Calu3 (cell line): ENCODE measurements at regions of chr12 and their contacts with region 1.

Region 1: DNA sequence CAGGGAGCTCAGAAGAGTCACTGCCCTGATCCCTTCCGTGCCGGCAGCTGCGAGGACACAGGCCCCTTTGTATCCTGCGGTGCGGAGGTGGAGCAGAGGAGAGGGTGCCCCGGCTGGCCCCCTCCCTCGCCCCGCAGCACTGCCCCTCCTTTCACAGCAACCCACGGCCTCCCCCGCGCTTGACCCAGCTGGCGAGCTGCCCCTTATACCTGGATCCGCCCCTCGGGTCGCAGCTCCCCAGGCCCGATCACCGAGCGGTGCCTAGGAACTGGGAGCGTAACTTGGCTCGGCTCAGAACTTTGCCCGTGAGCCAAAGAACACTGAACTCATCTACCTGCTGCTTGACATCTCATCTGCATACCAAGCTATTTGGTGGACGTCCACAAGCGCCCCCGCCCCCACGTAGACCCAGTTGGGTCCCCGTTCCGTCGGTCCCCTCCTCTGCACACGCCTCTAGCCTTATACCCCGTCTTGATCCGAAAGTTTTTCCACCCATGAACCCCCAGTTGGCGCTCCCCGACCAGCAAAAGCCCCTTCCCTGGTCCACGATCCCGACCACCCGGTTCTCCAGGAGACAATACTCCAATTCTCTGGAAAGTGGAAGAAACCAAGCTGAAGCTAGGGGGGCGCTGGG is 697 bp upstream of the DNAJC14 start:
- DNase-seq: no peak
- H3K4me3 Mint-ChIP-seq: peak overlapping the region; percentile 91
- H3K27ac Mint-ChIP-seq: peak overlapping the region; percentile 84
- H3K4me1 Mint-ChIP-seq: peaks cover 27% of the 10 kb centered on the region
- H3K27me3 Mint-ChIP-seq: no peaks in the 10 kb centered on the region
- CTCF ChIP-seq: no peak

Region 2: DNA sequence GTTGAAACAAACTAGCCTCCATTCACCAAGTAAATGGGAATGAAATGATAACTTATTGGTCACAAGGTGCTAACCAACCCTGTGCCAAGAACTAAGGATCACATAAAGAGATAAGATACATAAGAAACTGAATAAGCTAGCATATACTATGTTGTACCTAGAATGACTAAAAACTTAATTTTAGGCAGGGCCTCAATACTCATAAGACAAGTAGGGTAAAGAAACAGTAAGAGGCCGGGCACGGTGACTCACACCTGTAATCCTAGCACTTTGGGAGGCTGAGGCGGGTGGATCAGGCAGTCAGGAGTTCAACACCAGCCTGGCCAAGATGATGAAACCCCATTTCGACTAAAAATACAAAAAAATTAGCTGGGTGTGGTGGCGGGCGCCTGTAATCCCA is 69.4 kb before region 1 on chr12:
- CTCF ChIA-PET with region 1: no interaction called
- intact Hi-C with region 1: no loop called
- DNase-seq: no peak
- H3K4me3 Mint-ChIP-seq: no peak overlapping the region
- H3K27ac Mint-ChIP-seq: no peak overlapping the region
- H3K4me1 Mint-ChIP-seq: no peaks in the 10 kb centered on the region
- H3K27me3 Mint-ChIP-seq: no peaks in the 10 kb centered on the region
- CTCF ChIP-seq: no peak

Region 3: DNA sequence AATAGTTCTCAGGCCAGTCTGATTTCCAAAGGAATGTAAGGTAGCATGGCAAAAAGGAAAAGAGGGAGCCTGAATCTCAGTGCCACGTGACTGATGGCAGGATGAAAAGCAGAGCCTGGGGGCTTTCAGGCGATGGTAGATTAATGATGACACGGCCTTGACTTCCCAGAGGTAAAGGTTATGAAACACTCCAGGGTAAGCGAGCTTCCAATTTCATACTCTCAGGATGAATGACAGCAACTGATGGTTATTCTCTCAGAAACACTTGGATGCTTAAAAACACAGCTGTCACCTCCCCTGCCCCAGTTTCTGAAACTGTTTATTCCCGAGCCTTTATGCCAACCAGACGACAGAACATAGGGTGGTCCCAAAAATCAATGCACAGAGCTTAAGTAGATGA is 58.3 kb before region 1 on chr12:
- CTCF ChIA-PET with region 1: interaction called, 12 read pairs
- intact Hi-C with region 1: no loop called
- DNase-seq: no peak
- H3K4me3 Mint-ChIP-seq: no peak overlapping the region
- H3K27ac Mint-ChIP-seq: no peak overlapping the region
- H3K4me1 Mint-ChIP-seq: no peaks in the 10 kb centered on the region
- H3K27me3 Mint-ChIP-seq: no peaks in the 10 kb centered on the region
- CTCF ChIP-seq: no peak

Region 4: DNA sequence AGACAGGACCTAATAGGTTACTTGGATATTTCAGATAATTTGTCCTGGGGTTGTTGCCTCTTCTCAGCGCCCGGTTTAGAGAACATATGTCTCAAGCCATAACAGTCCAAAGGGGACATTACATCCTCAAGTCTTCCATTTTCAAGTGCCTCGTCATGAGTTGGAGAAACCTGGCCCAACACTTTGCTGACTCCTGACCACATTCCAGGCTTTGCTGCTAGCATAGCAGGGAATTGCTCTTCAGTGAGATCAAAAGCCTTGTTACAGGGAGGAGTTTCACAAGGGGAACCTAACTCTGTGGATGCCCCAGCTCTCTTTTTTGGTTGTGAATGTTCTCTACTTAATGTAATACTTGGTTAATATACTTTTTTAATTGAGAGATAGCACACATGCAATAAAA is 20.8 kb after region 1 on chr12:
- CTCF ChIA-PET with region 1: no interaction called
- intact Hi-C with region 1: no loop called
- DNase-seq: no peak
- H3K4me3 Mint-ChIP-seq: no peak overlapping the region
- H3K27ac Mint-ChIP-seq: no peak overlapping the region
- H3K4me1 Mint-ChIP-seq: peaks cover 8% of the 10 kb centered on the region
- H3K27me3 Mint-ChIP-seq: peaks cover 54% of the 10 kb centered on the region
- CTCF ChIP-seq: no peak

Region 5: GRCh38 chr12:55908726-55909512 is 78.8 kb after region 1 on chr12:
- CTCF ChIA-PET with region 1: no interaction called
- intact Hi-C with region 1: loop called (anchors 5 kb)
- DNase-seq: peak; percentile 26
- H3K4me3 Mint-ChIP-seq: peak overlapping the region; percentile 40
- H3K27ac Mint-ChIP-seq: peak overlapping the region; percentile 35
- H3K4me1 Mint-ChIP-seq: peaks cover 17% of the 10 kb centered on the region
- H3K27me3 Mint-ChIP-seq: no peaks in the 10 kb centered on the region
- CTCF ChIP-seq: no peak

Region 6: GRCh38 chr12:56425193-56425592 is 595.1 kb after region 1 on chr12:
- CTCF ChIA-PET with region 1: no interaction called
- intact Hi-C with region 1: no loop called
- DNase-seq: no peak
- H3K4me3 Mint-ChIP-seq: no peak overlapping the region
- H3K27ac Mint-ChIP-seq: no peak overlapping the region
- H3K4me1 Mint-ChIP-seq: no peaks in the 10 kb centered on the region
- H3K27me3 Mint-ChIP-seq: no peaks in the 10 kb centered on the region
- CTCF ChIP-seq: no peak